Left cardiac atrium (tissue), 4 donors: ENCODE measurements at regions of chr6 and their contacts with region 1.

Region 1: DNA sequence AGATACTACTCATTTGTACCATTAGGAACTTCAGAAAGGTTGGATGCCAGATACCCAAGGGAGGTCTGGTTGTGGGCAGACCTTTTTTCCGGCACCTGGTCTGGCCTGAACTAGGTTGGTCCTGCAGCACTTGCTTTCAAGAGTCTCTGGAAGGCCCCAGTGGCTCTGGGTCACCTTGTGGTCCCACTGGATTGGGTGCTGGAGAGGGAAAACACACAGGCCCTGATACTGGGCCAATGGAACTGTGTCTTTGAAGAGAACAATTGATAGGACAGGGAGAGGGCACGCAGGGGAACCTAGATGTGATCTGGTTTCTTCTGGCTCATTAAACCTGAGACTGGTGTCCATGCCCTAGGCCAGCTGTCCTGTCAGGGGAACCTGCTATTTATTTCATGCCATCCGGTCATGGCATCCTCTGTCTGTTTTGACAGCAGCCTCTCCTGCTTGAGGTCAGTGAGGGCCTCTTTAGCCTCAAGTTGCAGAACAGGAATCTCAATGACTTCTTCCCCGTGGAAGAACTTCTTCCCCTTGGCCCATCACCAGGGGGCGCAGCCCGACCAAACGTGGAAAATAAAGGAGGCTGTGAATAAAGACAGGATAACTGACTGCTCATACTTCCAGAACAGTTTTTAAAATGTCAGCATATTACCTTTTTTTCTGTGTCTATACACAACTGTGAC is 25.0 kb downstream of the TAF8 start:
- DNase-seq: peak; percentile 77
- ATAC-seq: peak; percentile 58 to 70

Region 2: GRCh38 chr6:42166444-42167141 is 91.3 kb after region 1 on chr6:
- intact Hi-C with region 1: loop called (anchors 1 to 5 kb)
- DNase-seq: peak; percentile 63
- ATAC-seq: peak; percentile 83 to 84

Region 3: DNA sequence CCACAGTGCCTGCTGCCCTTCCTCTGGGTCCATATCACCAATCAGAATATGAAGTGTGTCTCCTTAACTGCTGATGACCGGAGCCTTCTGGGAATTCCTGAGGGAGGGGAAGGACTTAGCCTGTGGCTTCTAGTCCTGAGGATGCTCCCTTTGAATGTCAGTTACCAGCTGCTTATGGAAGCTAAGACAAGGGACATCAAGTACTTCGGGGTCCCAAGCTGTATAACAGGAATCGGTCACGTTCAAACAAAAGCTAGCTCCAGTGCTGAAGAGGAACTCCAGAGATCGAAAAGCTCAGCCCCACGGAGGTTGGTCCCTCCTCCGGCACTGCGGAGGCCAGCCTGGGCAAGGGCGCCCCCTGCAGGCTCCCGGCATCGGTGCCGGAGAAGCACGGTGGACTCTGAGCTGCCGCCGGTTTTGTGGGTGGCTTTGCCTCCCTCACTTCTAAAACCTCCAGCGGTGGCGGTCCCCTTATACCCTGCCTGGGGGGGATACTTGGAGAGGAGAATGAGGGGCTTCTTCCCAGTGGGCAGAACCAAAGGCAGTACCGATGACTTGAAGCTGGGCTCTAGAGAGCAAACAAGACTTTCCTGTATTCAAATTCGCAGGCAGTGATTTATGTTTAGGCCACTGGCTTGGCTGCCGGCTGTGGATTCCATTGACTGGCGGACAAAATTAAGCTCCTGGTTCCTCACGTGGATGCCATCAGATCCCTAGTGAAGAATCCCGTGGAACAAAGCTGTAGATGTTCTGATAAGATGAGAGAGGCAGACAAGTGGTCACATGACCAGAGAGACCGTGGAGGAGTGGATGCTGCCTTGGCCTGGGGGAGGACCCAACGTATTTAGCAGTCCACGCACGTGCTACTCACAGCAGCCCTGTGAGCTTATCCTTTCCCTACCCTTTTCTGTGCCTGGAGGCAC is 472.4 kb after region 1 on chr6:
- intact Hi-C with region 1: loop called in 1 of 2 experiments (anchors 10 kb)
- DNase-seq: peak; percentile 87
- ATAC-seq: peak; percentile 99